ENCODE measurements at regions of chr11 and their contacts with region 1.

Region 1: DNA sequence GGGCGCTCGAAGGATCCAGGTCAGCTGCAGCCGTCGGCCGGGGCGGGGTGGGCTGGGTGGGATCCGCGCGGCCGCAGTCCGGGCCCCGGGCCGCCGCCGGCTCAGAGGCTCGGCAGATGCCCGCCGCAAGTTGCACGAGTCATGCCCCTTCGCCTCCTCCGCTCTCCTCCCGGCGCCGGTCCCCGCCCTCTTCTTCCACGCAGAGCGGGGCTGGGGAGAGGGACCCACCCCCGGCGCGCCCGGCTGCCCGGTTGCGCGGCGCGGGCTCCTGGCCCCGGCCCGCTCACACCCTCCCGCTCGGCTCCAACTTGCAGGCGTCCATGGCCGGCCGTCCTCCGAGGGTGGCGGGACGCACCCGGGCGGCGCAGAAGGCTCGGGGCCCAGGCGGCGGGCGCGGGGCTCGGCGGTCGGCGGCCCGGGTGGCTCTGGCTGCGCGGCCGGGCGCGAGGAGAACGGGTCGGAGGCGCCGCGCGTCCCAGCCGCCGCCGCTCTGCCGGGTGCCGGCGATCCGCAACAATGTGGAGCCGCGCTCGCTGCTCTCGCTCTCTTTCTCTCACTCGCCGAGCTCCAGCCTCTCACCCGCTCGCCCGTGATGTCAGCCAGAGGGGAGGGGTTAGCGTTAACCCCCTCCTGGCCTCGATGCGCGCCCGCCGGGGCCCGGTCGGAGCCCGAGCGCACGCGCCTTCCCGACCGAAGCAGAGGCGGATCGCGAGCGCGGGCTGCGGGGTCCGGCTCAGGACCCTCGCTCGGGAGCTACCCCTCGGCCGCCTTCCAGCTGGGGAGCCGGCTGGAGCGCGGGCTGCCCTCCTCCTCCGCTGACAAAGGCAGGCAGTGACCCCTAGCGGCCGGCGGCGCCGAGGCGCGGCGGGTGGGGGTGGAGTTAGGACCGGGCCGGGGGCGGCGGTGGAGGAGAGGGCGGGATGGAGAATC is at the start of gene NECTIN1:
- DNase-seq: peak; percentile 75 to 78
- ATAC-seq: peak; percentile 90 to 94
- H3K4me3 ChIP-seq: peak within 1 kb of the TSS; percentile 81
- H3K27ac ChIP-seq: peak within 1 kb of the TSS; percentile 89 to 93
- H3K4me1 ChIP-seq: peaks cover 6% of the 10 kb centered on the region; the same call in 1 of the 3 replicates
- CTCF ChIP-seq: peak; percentile 90
- EP300 ChIP-seq: no peak
- POLR2A ChIP-seq: peak; percentile 85
- RAD21 ChIP-seq: peak; percentile 53 to 79; a peak in 4 of 5 replicates
- polyA plus RNA-seq, gene NECTIN1: 2.2 and 4.6 TPM in 2 replicates

Region 2: GRCh38 chr11:119666463-119667131 is 62.3 kb before region 1 on chr11:
- CTCF ChIA-PET with region 1: interaction called, 11 read pairs
- POLR2A ChIA-PET with region 1: no interaction called
- DNase-seq: peak; percentile 61 to 63
- ATAC-seq: peak; percentile 96 to 100
- H3K4me3 ChIP-seq: no peak overlapping the region
- H3K27ac ChIP-seq: no peak overlapping the region
- H3K4me1 ChIP-seq: no peaks in the 10 kb centered on the region
- CTCF ChIP-seq: peak; percentile 74
- EP300 ChIP-seq: no peak
- POLR2A ChIP-seq: no peak
- RAD21 ChIP-seq: peak; percentile 92 to 93

Region 3: GRCh38 chr11:119741369-119742262 is 12.7 kb after region 1 on chr11:
- CTCF ChIA-PET with region 1: interaction called, 20 read pairs
- POLR2A ChIA-PET with region 1: no interaction called
- DNase-seq: peak; percentile 20 to 58
- ATAC-seq: peak; percentile 89 to 97
- H3K4me3 ChIP-seq: no peak overlapping the region; the same call in 2 of the 3 replicates
- H3K27ac ChIP-seq: 0 out of 6 replicates have a peak overlapping the region, but pooled peaks of 1 of the 2 experiments have one; percentile 46
- H3K4me1 ChIP-seq: no peaks in the 10 kb centered on the region
- CTCF ChIP-seq: peak; percentile 62
- EP300 ChIP-seq: no peak
- POLR2A ChIP-seq: no peak
- RAD21 ChIP-seq: peak in 1 of 2 experiments; percentile 13; a peak in 1 of 5 replicates

Region 4: DNA sequence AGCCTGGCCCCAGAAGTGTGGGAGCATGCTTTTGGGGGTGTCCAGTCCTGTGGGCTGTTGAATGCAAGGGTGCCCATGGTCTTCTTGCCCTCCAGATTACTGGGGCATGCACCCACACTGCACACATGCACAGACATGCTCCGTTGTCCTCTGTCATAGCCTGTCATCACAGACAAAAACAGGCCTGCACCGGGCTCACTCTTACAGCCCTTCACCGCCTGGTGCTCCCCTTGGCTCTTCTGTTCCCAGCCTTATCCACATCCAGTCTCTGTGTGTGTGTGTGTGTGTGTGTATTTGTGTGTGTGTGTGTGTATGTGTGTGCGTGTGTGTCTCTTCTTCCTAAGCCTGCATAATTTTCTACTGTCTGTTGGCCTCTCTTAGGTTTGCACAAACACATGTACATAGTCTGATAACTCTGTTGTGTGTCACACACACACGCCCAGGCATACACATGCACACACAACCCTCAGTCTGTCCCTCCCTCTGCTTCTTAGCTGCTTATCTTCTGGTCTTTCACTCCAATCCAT is 23.5 kb after region 1 on chr11:
- CTCF ChIA-PET with region 1: interaction called, 12 read pairs
- POLR2A ChIA-PET with region 1: no interaction called
- DNase-seq: no peak
- ATAC-seq: peak in 1 of 2 experiments; percentile 27; a peak in 1 of 6 replicates
- H3K4me3 ChIP-seq: no peak overlapping the region
- H3K27ac ChIP-seq: no peak overlapping the region
- H3K4me1 ChIP-seq: no peaks in the 10 kb centered on the region
- CTCF ChIP-seq: no peak
- EP300 ChIP-seq: no peak
- POLR2A ChIP-seq: no peak
- RAD21 ChIP-seq: no peak

Region 5: DNA sequence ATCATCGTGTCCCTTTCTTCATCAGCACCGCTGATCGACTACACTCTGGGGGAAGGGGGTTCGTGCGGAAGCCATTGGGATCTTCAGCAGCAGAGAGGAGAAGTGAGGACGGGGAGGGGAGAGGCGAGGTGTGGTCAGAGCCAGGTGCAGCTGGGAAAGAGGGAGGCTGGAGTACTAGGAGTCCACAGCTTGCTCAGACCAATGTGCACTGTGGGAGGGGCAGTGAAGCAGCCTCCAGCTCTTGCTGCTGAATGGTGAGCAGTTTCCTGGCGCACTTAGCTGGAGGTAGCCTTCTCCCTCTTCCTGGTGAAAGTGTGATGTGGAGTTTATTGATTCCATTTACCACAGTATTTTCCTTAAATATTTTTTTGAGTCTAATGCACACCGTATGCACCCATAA is 99.1 kb after region 1 on chr11:
- CTCF ChIA-PET with region 1: no interaction called
- POLR2A ChIA-PET with region 1: no interaction called
- DNase-seq: no peak
- ATAC-seq: no peak
- H3K4me3 ChIP-seq: no peak overlapping the region
- H3K27ac ChIP-seq: no peak overlapping the region
- H3K4me1 ChIP-seq: no peaks in the 10 kb centered on the region
- CTCF ChIP-seq: no peak
- EP300 ChIP-seq: no peak
- POLR2A ChIP-seq: no peak
- RAD21 ChIP-seq: no peak